K562 (cell line): ENCODE measurements at regions of chr19 and their contacts with region 1.

Region 1: GRCh38 chr19:9711815-9712214 is 36.9 kb upstream of the ZNF562 start:
- DNase-seq: no peak
- ATAC-seq: no peak
- H3K4me3 ChIP-seq: no peak overlapping the region
- H3K27ac ChIP-seq: no peak overlapping the region
- H3K4me1 ChIP-seq: no peaks in the 10 kb centered on the region
- H3K27me3 ChIP-seq: no peaks in the 10 kb centered on the region
- CTCF ChIP-seq: no peak
- EP300 ChIP-seq: no peak
- POLR2A ChIP-seq: no peak
- RAD21 ChIP-seq: no peak

Region 2: DNA sequence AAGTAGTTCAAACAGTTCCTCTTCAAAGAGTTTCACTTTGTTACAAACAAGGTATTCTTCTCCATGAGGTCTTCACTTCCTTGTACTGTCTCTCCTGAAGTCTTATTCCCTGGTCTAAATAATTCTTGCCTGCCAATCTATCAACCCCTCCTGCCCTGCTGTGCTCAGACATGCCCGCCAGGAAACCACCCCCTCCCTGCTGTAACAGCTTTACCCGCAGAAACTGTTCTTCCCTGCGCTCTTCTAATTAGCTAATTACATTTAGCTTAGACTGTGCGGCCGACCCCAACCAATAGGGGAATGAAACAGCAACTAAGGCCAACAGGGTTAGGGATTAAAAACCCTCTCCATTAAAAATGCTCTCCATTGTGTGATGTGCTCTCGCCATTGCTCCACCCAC is 10.0 kb after region 1 on chr19:
- CTCF ChIA-PET with region 1: no interaction called
- POLR2A ChIA-PET with region 1: interaction called, 13 read pairs
- in situ Hi-C with region 1: no loop called
- intact Hi-C with region 1: no loop called
- DNase-seq: no peak
- ATAC-seq: no peak
- H3K4me3 ChIP-seq: no peak overlapping the region
- H3K27ac ChIP-seq: no peak overlapping the region
- H3K4me1 ChIP-seq: no peaks in the 10 kb centered on the region; a peak in 1 of 5 replicates
- H3K27me3 ChIP-seq: no peaks in the 10 kb centered on the region
- CTCF ChIP-seq: no peak
- EP300 ChIP-seq: no peak
- POLR2A ChIP-seq: no peak
- RAD21 ChIP-seq: no peak

Region 3: GRCh38 chr19:9847087-9847671 is 135.4 kb after region 1 on chr19:
- CTCF ChIA-PET with region 1: no interaction called
- POLR2A ChIA-PET with region 1: no interaction called
- in situ Hi-C with region 1: no loop called
- intact Hi-C with region 1: no loop called
- DNase-seq: peak; percentile 73 to 80 (median 77)
- ATAC-seq: peak; percentile 92
- H3K4me3 ChIP-seq: no peak overlapping the region
- H3K27ac ChIP-seq: no peak overlapping the region
- H3K4me1 ChIP-seq: peaks cover 0 to 36% of the 10 kb centered on the region in 2 experiments; a peak in 3 of 5 replicates
- H3K27me3 ChIP-seq: no peaks in the 10 kb centered on the region
- CTCF ChIP-seq: peak; percentile 70 to 78 (median 74)
- EP300 ChIP-seq: no peak
- POLR2A ChIP-seq: no peak
- RAD21 ChIP-seq: peak; percentile 19 to 62; a peak in 3 of 4 replicates